Endothelial cell of umbilical vein (primary cell): ENCODE measurements at regions of chr1 and their contacts with region 1.

Region 1: GRCh38 chr1:218705911-218706893 is 361.1 kb downstream of the TGFB2 start:
- DNase-seq: peak; percentile 74
- H3K4me3 ChIP-seq: no peak overlapping the region
- H3K27ac ChIP-seq: peak overlapping the region; percentile 86
- H3K4me1 ChIP-seq: peaks cover 26% of the 10 kb centered on the region
- H3K27me3 ChIP-seq: no peaks in the 10 kb centered on the region
- CTCF ChIP-seq: no peak
- POLR2A ChIP-seq: no peak

Region 2: GRCh38 chr1:218384581-218384993 is 321.6 kb before region 1 on chr1:
- CTCF ChIA-PET with region 1: no interaction called
- POLR2A ChIA-PET with region 1: no interaction called
- dilution Hi-C with region 1: no loop called
- intact Hi-C with region 1: loop called (anchors 2 kb)
- DNase-seq: peak; percentile 68
- H3K4me3 ChIP-seq: no peak overlapping the region
- H3K27ac ChIP-seq: peak overlapping the region; percentile 38
- H3K4me1 ChIP-seq: peaks cover 22% of the 10 kb centered on the region
- H3K27me3 ChIP-seq: no peaks in the 10 kb centered on the region
- CTCF ChIP-seq: no peak
- POLR2A ChIP-seq: no peak

Region 3: DNA sequence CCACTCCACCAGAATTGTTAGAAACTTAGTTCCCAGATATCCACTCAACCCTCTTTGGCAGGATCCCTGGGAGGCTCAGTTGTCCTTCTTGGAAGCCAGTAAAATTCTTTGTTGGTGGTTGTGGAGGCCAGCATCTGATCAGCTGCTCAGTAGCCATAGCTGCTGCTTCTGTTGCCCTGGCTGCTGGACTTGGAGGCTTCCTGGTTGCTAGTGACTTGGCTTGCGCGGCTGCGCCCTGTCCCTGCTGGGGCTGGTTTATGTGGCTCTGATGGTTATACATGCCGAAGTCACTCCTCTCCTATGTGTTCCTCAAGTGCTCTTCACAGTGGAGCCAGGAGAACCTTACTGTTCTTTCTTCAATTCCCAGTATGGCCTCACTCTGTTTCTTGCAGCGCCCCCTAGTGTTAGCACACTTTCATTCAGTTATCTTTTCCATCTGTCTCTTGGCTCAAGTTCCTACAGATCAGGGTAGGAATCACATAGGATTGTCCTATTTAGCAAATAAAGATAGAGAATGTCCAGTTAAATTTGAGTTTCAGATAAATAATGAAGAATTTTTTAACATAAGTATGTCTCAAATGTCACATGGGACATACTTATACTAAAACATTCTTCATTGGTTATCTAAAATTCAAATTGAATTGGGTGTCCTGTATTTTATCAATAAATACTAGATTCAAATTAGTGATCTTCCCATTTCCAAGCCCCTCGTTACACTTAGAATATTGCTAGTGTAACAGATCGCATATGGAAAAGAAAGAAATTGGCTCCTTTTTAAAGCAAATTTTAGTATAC is 184.6 kb before region 1 on chr1:
- CTCF ChIA-PET with region 1: no interaction called
- POLR2A ChIA-PET with region 1: no interaction called
- dilution Hi-C with region 1: no loop called
- intact Hi-C with region 1: loop called (anchors 10 kb)
- DNase-seq: peak; percentile 65
- H3K4me3 ChIP-seq: no peak overlapping the region
- H3K27ac ChIP-seq: no peak overlapping the region
- H3K4me1 ChIP-seq: peaks cover 4% of the 10 kb centered on the region
- H3K27me3 ChIP-seq: no peaks in the 10 kb centered on the region
- CTCF ChIP-seq: peak; percentile 45 to 72
- POLR2A ChIP-seq: no peak

Region 4: DNA sequence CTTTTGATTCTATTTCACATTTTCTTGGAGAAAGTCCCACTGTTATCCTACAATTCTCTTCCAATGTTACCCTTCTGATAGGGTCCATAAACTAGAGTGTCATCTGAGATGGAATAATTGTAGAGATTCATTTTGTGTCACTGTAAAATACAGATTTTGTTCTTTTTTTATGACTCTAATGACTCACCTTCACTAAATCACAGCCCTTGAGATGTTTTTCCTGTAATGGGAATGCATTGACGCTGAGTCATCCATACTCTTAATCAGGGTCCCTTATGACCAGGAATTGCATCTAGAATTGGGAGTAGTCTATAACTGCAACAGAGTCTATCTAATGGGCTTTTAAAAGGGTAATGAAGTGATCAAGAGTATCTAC is 45.5 kb before region 1 on chr1:
- CTCF ChIA-PET with region 1: no interaction called
- POLR2A ChIA-PET with region 1: no interaction called
- dilution Hi-C with region 1: no loop called
- intact Hi-C with region 1: loop called (anchors 1 kb)
- DNase-seq: peak; percentile 91
- H3K4me3 ChIP-seq: no peak overlapping the region
- H3K27ac ChIP-seq: peak overlapping the region; percentile 64
- H3K4me1 ChIP-seq: peaks cover 26% of the 10 kb centered on the region
- H3K27me3 ChIP-seq: no peaks in the 10 kb centered on the region
- CTCF ChIP-seq: no peak
- POLR2A ChIP-seq: no peak

Region 5: GRCh38 chr1:218874313-218874712 is 168.1 kb after region 1 on chr1:
- CTCF ChIA-PET with region 1: no interaction called
- POLR2A ChIA-PET with region 1: no interaction called
- dilution Hi-C with region 1: no loop called
- intact Hi-C with region 1: loop called (anchors 2 kb)
- DNase-seq: peak; percentile 90
- H3K4me3 ChIP-seq: no peak overlapping the region
- H3K27ac ChIP-seq: peak overlapping the region; percentile 72
- H3K4me1 ChIP-seq: peaks cover 20% of the 10 kb centered on the region
- H3K27me3 ChIP-seq: no peaks in the 10 kb centered on the region
- CTCF ChIP-seq: no peak
- POLR2A ChIP-seq: no peak